Endothelial cell of umbilical vein (primary cell): ENCODE measurements at regions of chr3 and their contacts with region 1.

Region 1: GRCh38 chr3:62188681-62189383 is 184.5 kb downstream of the FEZF2 start:
- DNase-seq: peak; percentile 80
- H3K4me3 ChIP-seq: no peak overlapping the region
- H3K27ac ChIP-seq: no peak overlapping the region
- H3K4me1 ChIP-seq: peaks cover 5% of the 10 kb centered on the region
- H3K27me3 ChIP-seq: no peaks in the 10 kb centered on the region
- CTCF ChIP-seq: peak; percentile 75 to 84
- POLR2A ChIP-seq: no peak

Region 2: DNA sequence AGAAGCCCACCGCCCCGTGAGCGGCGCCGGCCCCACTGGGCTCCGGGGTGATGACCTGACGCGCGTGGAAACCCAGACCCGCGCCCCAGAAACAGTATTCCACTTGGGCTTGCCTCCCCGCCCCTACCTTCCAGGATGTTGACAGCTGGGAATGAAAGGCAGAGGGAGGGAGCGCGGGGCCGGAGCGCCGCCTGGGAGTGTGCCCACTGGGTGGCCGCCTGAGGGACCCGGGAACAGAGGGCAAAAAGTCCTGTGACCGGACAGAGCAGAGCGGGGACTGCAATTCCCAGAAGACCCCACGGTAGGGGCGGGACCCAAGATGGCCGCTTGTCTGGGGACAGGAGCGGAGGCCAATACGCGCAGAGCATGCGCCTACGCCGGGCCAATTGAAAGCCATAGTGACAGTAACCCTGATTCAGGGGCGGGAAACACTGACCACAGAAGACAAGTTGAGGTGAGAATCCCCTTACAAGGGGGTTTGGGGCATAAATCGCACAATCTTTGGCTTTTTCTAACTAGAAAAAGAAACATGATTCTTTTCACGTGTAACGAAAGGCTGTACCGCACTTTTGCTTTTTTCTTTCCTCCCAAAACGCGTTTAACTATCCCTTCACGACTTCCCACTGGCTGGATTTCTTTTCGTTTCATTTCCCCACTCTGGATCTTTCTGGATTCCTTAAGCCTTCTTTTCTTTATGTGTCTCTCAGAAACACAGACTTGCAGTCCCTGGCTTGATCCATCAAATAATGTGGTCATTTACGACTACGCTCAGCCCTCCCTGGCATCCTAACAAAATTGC is 937.5 kb before region 1 on chr3 and contains the start of gene FHIT:
- CTCF ChIA-PET with region 1: no interaction called
- POLR2A ChIA-PET with region 1: no interaction called
- dilution Hi-C with region 1: no loop called
- intact Hi-C with region 1: loop called (anchors 10 kb)
- DNase-seq: peak; percentile 95
- H3K4me3 ChIP-seq: peak within 1 kb of the TSS; percentile 62 to 99 (median 94)
- H3K27ac ChIP-seq: peak within 1 kb of the TSS; percentile 65
- H3K4me1 ChIP-seq: peaks cover 31% of the 10 kb centered on the region
- H3K27me3 ChIP-seq: no peaks in the 10 kb centered on the region
- CTCF ChIP-seq: no peak
- POLR2A ChIP-seq: no peak
- total RNA-seq, gene FHIT: 2.2 and 3.1 TPM in 2 replicates

Region 3: GRCh38 chr3:61530355-61530754 is 658.5 kb before region 1 on chr3:
- CTCF ChIA-PET with region 1: interaction called, 25 read pairs
- POLR2A ChIA-PET with region 1: no interaction called
- dilution Hi-C with region 1: no loop called
- intact Hi-C with region 1: loop called (anchors 1 kb)
- DNase-seq: peak; percentile 51
- H3K4me3 ChIP-seq: no peak overlapping the region
- H3K27ac ChIP-seq: no peak overlapping the region
- H3K4me1 ChIP-seq: no peaks in the 10 kb centered on the region
- H3K27me3 ChIP-seq: peaks cover 4 to 5% of the 10 kb centered on the region in 2 experiments
- CTCF ChIP-seq: peak; percentile 33 to 51
- POLR2A ChIP-seq: no peak

Region 4: GRCh38 chr3:61936344-61936937 is 252.4 kb before region 1 on chr3:
- CTCF ChIA-PET with region 1: interaction called, 26 read pairs
- POLR2A ChIA-PET with region 1: no interaction called
- dilution Hi-C with region 1: no loop called
- intact Hi-C with region 1: loop called (anchors 1 kb)
- DNase-seq: peak; percentile 39
- H3K4me3 ChIP-seq: no peak overlapping the region
- H3K27ac ChIP-seq: no peak overlapping the region
- H3K4me1 ChIP-seq: no peaks in the 10 kb centered on the region
- H3K27me3 ChIP-seq: no peaks in the 10 kb centered on the region
- CTCF ChIP-seq: peak; percentile 73 to 83
- POLR2A ChIP-seq: no peak

Region 5: DNA sequence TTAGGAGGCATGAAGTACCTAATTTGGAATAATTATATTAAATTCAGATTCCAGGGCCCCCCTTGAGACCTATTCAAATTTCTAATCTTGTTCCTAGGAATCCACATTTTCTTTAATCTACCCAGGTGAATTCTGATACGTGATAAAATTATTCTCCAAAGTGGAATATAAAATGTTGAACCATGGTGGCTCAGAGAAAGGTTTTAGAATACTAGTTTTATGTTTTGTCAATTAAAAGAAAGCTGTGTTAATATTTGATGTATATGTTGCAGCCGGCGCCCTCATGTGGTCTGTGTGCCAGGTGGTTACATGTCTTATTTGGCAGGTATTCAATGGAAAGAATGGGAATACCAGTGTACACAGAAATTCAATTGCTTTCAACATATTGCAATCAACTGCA is 137.3 kb before region 1 on chr3:
- CTCF ChIA-PET with region 1: interaction called, 15 read pairs
- POLR2A ChIA-PET with region 1: no interaction called
- dilution Hi-C with region 1: no loop called
- intact Hi-C with region 1: loop called (anchors 1 kb)
- DNase-seq: peak; percentile 61
- H3K4me3 ChIP-seq: no peak overlapping the region
- H3K27ac ChIP-seq: no peak overlapping the region
- H3K4me1 ChIP-seq: no peaks in the 10 kb centered on the region
- H3K27me3 ChIP-seq: no peaks in the 10 kb centered on the region
- CTCF ChIP-seq: peak; percentile 44 to 45
- POLR2A ChIP-seq: no peak

Region 6: GRCh38 chr3:62139936-62140335 is 48.9 kb before region 1 on chr3:
- CTCF ChIA-PET with region 1: interaction called, 31 read pairs
- POLR2A ChIA-PET with region 1: no interaction called
- dilution Hi-C with region 1: no loop called
- intact Hi-C with region 1: no loop called
- DNase-seq: no peak
- H3K4me3 ChIP-seq: no peak overlapping the region
- H3K27ac ChIP-seq: no peak overlapping the region
- H3K4me1 ChIP-seq: peaks cover 14% of the 10 kb centered on the region
- H3K27me3 ChIP-seq: no peaks in the 10 kb centered on the region
- CTCF ChIP-seq: no peak
- POLR2A ChIP-seq: no peak

Region 7: DNA sequence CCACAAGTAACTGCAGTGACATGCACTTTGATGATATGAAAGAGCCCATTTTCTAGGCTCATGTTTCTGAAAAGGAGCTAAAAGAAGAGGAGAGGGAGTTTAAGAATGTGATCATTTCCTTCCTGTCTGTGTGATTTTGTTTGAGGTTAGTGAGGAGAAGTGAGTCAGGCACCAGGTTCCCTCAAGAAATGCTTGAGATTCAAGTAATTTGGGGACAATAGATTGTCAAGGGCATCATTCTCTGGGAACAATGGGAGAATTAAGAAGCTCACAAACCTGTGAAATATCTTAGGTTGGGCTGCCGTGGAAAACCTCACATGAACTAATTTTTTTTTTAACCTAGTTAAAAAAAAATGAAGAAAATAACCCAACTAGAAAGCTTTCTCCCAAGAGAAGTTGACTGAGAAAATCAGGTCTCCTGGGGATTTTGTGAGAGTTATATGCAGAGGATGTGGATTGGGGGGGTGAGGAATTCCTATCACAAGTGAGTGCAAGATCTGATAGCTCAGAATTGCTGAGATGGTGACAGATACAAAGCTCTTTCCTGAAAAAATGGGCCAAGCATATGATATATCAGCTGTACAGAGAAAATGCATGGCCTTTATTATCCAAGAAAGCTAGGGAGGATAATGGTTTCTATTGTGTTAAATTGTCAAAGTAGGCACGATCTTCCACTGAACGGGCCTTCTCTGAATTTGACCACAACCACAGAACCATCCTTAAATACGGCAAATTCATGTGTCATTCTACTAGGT is 18.7 kb before region 1 on chr3:
- CTCF ChIA-PET with region 1: interaction called, 27 read pairs
- POLR2A ChIA-PET with region 1: no interaction called
- dilution Hi-C with region 1: no loop called
- intact Hi-C with region 1: no loop called
- DNase-seq: peak; percentile 74
- H3K4me3 ChIP-seq: no peak overlapping the region
- H3K27ac ChIP-seq: peak overlapping the region; percentile 95
- H3K4me1 ChIP-seq: peaks cover 21% of the 10 kb centered on the region
- H3K27me3 ChIP-seq: no peaks in the 10 kb centered on the region
- CTCF ChIP-seq: no peak
- POLR2A ChIP-seq: no peak